Spleen (tissue), 13 donors: ENCODE measurements at regions of chr9 and their contacts with region 1.

Region 1: DNA sequence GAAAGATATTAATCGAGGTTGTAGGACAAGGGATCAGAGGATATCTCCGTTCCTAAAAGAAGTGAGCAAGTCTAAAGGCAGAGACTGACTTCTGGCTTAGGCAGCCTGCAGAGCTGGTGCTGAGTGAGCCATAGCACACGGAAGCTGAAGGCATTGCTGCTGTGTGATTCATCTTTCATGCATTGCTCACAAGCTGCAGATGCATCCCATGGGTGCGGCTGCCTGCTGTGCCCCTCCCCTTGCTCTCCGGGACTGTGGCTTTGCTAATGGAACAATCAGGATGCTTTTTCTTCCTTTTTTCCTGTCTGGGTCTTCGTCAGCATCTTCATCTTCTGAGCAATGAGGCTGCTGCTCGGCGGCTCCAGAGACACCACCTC is 341.4 kb downstream of the DIRAS2 start:
- DNase-seq: no peak
- H3K4me3 ChIP-seq: no peak overlapping the region
- H3K27ac ChIP-seq: no peak overlapping the region
- H3K4me1 ChIP-seq: no peaks in the 10 kb centered on the region
- H3K27me3 ChIP-seq: peaks cover 0 to 23% (median 0%) of the 10 kb centered on the region in 7 donors
- CTCF ChIP-seq: no peak
- POLR2A ChIP-seq: no peak

Region 2: GRCh38 chr9:90240541-90240940 is 60.7 kb before region 1 on chr9:
- intact Hi-C with region 1: loop called (anchors 10 kb)
- DNase-seq: no peak
- H3K4me3 ChIP-seq: no peak overlapping the region
- H3K27ac ChIP-seq: no peak overlapping the region
- H3K4me1 ChIP-seq: no peaks in the 10 kb centered on the region
- H3K27me3 ChIP-seq: no peaks in the 10 kb centered on the region
- CTCF ChIP-seq: no peak
- POLR2A ChIP-seq: no peak